Activated naive CD4-positive, alpha-beta T cell treated with anti-CD3 and anti-CD28 coated beads for 36 hours (primary cell): ENCODE measurements at regions of chr20 and their contacts with region 1.

Region 1: DNA sequence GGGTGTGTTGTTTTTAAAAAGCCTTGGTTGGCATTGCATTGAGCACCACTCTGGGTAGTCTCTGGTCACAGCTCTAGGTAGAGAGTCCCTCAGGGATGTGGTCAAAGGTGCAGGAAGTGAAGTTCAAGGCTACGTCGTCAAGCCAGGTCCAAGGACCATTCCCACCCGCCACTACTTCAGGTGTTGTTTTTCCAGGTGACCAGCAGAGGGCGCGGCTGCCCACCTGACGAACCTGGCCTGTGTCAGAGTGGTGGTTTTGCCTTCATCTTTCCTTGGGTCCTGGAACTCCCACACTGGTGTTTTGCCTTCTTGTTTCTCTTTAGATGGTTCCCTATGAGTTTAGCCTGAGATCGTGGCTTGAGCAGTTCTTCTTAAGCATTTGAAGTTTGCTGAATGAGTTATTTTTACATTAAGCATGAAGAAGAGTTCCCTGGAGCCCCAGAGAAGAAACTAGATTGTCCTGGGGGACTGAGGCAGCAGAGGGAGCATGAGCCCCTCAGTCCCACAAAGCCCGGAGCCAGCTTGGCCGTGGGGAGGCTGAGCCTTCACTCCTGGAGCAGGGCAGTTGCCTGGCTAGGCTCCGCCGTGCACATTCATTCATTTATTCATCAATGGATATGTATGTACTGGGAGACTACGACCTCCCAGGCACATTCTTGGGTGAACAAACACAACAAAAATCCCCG is 5.6 kb upstream of the PHACTR3 start:
- DNase-seq: peak; percentile 55
- H3K4me3 Mint-ChIP-seq: no peak overlapping the region
- H3K27ac Mint-ChIP-seq: no peak overlapping the region
- H3K4me1 Mint-ChIP-seq: no peaks in the 10 kb centered on the region
- H3K27me3 Mint-ChIP-seq: peaks cover 39% of the 10 kb centered on the region

Region 2: GRCh38 chr20:59751056-59751688 is 152.4 kb after region 1 on chr20:
- CTCF ChIA-PET with region 1: interaction called, 15 read pairs
- intact Hi-C with region 1: loop called (anchors 1 kb)
- DNase-seq: peak; percentile 63
- H3K4me3 Mint-ChIP-seq: no peak overlapping the region
- H3K27ac Mint-ChIP-seq: no peak overlapping the region
- H3K4me1 Mint-ChIP-seq: no peaks in the 10 kb centered on the region
- H3K27me3 Mint-ChIP-seq: peaks cover 9% of the 10 kb centered on the region

Region 3: DNA sequence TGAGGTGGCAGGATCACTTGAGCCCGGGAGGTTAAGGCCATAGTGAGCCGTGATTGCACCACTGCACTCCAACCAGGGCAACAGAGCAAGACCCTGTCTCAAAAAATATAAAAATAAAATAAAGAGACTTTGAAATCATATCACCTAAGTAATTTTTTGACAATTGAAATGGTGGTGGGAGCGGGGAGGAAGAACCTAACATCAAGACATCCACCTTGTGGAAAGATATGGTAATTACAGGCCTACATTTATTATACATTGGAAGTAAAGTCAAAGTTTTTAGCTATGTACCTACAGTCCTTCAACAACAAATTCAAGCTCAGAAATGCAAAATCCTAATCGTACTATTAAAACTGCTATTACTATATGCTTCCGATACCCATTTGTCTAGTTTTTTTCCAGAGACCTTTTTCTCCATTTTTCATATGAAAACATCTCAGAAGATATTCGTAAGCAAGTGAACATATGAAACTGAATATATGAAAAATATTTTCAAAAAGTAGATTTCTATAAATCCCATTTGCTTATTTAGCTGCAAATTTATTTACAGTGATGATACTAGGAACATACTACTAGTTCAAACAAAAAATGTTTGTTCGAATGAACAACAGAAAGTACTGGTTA is 251.4 kb after region 1 on chr20:
- CTCF ChIA-PET with region 1: interaction called, 4 read pairs
- intact Hi-C with region 1: loop called (anchors 1 kb)
- DNase-seq: no peak
- H3K4me3 Mint-ChIP-seq: no peak overlapping the region
- H3K27ac Mint-ChIP-seq: no peak overlapping the region
- H3K4me1 Mint-ChIP-seq: no peaks in the 10 kb centered on the region
- H3K27me3 Mint-ChIP-seq: no peaks in the 10 kb centered on the region